Activated CD4-positive, alpha-beta T cell treated with anti-CD3 and anti-CD28 coated beads for 36 hours (primary cell): ENCODE measurements at regions of chr6 and their contacts with region 1.

Region 1: DNA sequence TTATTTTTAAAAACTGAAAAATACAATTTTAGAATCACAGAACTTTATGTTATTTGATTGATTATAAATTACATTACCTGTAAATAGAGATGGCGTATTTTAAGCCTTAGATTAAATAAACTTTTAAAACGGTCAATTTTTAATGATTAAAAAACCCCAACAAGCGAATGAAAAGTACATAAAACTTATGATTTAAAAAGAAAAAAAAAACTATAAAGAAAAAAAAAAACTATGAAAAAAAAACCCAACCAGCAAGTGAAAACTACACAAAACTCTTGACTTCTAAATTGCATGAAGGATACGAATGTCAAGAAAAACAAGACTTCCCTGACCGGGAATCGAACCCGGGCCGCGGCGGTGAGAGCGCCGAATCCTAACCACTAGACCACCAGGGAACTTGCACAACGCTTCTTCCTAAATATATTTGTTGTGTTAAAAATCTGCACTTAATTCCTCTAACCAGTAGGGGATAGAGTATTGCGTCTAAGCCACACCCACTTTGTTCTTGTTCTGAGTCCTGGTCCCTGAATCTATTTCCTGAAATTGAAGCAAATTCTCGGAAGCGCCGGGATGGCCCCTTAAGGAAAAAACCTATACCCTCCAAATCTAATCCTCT is 10.7 kb upstream of the NCOA7 start:
- DNase-seq: peak; percentile 89
- ATAC-seq: peak; percentile 77
- H3K4me3 Mint-ChIP-seq: no peak overlapping the region
- H3K27ac Mint-ChIP-seq: no peak overlapping the region
- H3K4me1 Mint-ChIP-seq: peaks cover 20% of the 10 kb centered on the region
- H3K27me3 Mint-ChIP-seq: no peaks in the 10 kb centered on the region

Region 2: GRCh38 chr6:125678601-125679000 is 101.4 kb before region 1 on chr6:
- CTCF ChIA-PET with region 1: no interaction called
- POLR2A ChIA-PET with region 1: interaction called, 10 read pairs
- intact Hi-C with region 1: no loop called
- DNase-seq: no peak
- ATAC-seq: no peak
- H3K4me3 Mint-ChIP-seq: no peak overlapping the region
- H3K27ac Mint-ChIP-seq: no peak overlapping the region
- H3K4me1 Mint-ChIP-seq: peaks cover 8% of the 10 kb centered on the region
- H3K27me3 Mint-ChIP-seq: peaks cover 38% of the 10 kb centered on the region

Region 3: DNA sequence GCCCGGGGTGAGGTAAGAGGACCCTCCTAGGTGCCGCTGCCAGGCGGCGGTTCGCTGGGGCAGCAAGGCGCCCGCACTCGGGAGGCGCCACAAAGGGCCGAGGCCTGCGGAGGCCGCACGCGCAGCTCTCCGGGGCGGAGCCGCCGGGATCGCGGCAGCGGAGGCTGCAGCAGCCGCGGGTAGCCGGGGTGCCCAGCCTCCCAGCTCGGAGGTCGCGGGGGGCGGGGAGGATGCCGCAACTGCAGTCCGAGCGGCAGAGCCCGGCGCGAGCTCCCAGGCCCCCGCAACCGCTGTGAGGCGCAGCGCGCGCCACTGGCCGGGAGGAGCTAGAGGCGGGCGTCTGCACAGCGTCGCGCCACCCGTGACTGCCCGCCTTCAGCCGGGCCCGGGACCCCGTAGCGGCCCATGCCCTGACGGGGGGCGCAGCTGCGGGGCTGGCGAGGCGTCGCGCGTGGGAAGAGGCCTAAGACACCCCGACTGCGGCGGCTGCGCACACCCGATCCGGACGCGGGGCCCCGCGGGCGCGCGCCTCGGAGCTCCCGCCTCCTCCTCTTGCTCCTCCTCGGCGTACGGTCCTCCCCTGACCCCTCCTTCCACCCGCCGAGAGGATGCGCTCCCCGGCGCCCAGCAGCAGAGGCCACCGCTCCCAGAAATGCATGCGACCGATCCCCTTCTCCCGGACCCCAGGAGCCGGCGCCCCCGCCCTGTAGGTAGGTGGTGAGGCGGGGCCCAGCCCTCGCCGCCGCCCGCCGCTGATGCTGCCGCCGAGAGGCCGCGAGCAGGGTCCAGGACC is 10.5 kb after region 1 on chr6 and contains the start of gene NCOA7:
- CTCF ChIA-PET with region 1: interaction called, 80 read pairs
- POLR2A ChIA-PET with region 1: interaction called, 62 read pairs
- intact Hi-C with region 1: loop called (anchors 1 kb)
- DNase-seq: peak; percentile 89
- ATAC-seq: peak; percentile 76
- H3K4me3 Mint-ChIP-seq: peak within 1 kb of the TSS; percentile 96
- H3K27ac Mint-ChIP-seq: peak within 1 kb of the TSS; percentile 95
- H3K4me1 Mint-ChIP-seq: peaks cover 52% of the 10 kb centered on the region
- H3K27me3 Mint-ChIP-seq: no peaks in the 10 kb centered on the region
- total RNA-seq, gene NCOA7: 54.3 to 67.4 TPM

Region 4: GRCh38 chr6:125918681-125919566 is 138.9 kb after region 1 on chr6:
- CTCF ChIA-PET with region 1: interaction called, 4 read pairs
- POLR2A ChIA-PET with region 1: interaction called, 17 read pairs
- intact Hi-C with region 1: loop called (anchors 1 kb)
- DNase-seq: peak; percentile 68
- ATAC-seq: peak; percentile 96
- H3K4me3 Mint-ChIP-seq: peak overlapping the region; percentile 84
- H3K27ac Mint-ChIP-seq: peak overlapping the region; percentile 98
- H3K4me1 Mint-ChIP-seq: peaks cover 37% of the 10 kb centered on the region
- H3K27me3 Mint-ChIP-seq: no peaks in the 10 kb centered on the region

Region 5: GRCh38 chr6:125986300-125987025 is 206.4 kb after region 1 on chr6 and contains the start of gene TRMT11:
- CTCF ChIA-PET with region 1: interaction called, 5 read pairs
- POLR2A ChIA-PET with region 1: no interaction called
- intact Hi-C with region 1: loop called in 1 of 2 experiments (anchors 1 kb)
- DNase-seq: peak; percentile 89
- ATAC-seq: peak; percentile 96
- H3K4me3 Mint-ChIP-seq: no peak within 1 kb of the TSS
- H3K27ac Mint-ChIP-seq: peak within 1 kb of the TSS; percentile 20
- H3K4me1 Mint-ChIP-seq: peaks cover 7% of the 10 kb centered on the region
- H3K27me3 Mint-ChIP-seq: no peaks in the 10 kb centered on the region
- total RNA-seq, gene TRMT11: 33.4 to 40.5 TPM

Region 6: DNA sequence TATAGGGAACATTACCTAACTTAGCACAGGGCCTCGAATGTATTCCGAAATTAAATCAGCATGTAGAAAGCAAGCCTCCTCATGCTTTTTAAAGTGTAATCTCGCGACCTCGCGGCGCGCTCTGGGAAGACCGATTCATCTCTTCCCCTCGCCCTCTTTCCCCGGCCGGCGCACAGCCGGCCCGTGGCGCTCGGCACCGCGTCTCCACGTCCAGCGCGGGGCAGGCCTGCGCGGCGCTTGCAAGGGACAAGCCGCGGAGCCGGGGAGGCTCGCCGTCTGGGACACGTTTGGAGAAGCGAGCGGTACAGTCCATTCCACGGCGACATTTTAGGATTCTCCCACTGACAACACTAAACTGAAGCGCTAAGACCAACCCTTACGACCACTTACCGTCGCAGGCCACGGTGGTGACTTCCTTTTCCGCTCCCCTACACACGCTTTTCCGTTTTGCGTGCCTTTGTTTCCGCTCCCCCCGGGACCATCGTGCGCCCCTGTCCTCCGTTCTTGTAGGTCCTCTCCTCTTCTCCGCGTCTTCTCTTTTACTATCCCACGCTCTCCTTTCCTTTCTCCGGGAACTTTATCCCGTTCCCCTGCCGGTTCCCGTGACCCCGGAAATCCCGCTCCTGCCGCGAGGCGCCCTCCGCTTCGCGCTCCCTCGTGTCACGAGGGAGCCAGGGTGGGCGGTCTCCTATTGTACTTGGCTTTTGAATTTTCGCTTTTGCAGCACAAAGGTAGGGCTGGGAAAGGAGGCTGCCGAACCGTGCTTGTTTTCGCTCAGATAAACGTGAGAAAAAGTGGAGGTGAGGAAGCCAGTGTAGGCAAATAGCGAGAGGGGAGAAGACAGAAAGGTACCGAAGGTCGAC is 1563.1 kb after region 1 on chr6 and contains the start of gene ECHDC1:
- CTCF ChIA-PET with region 1: no interaction called
- POLR2A ChIA-PET with region 1: no interaction called
- intact Hi-C with region 1: loop called in 1 of 2 experiments (anchors 1 kb)
- DNase-seq: peak; percentile 85
- ATAC-seq: peak; percentile 85
- H3K4me3 Mint-ChIP-seq: no peak within 1 kb of the TSS
- H3K27ac Mint-ChIP-seq: no peak within 1 kb of the TSS
- H3K4me1 Mint-ChIP-seq: peaks cover 19% of the 10 kb centered on the region
- H3K27me3 Mint-ChIP-seq: no peaks in the 10 kb centered on the region
- total RNA-seq, gene ECHDC1: 31.1 to 48.2 TPM

Region 7: GRCh38 chr6:127570739-127571389 is 1790.8 kb after region 1 on chr6:
- CTCF ChIA-PET with region 1: no interaction called
- POLR2A ChIA-PET with region 1: no interaction called
- intact Hi-C with region 1: loop called in 1 of 2 experiments (anchors 5 kb)
- DNase-seq: no peak
- ATAC-seq: peak; percentile 76
- H3K4me3 Mint-ChIP-seq: no peak overlapping the region
- H3K27ac Mint-ChIP-seq: no peak overlapping the region
- H3K4me1 Mint-ChIP-seq: peaks cover 14% of the 10 kb centered on the region
- H3K27me3 Mint-ChIP-seq: peaks cover 5% of the 10 kb centered on the region